ENCODE measurements at regions of chr7 and their contacts with region 1.

Region 1: DNA sequence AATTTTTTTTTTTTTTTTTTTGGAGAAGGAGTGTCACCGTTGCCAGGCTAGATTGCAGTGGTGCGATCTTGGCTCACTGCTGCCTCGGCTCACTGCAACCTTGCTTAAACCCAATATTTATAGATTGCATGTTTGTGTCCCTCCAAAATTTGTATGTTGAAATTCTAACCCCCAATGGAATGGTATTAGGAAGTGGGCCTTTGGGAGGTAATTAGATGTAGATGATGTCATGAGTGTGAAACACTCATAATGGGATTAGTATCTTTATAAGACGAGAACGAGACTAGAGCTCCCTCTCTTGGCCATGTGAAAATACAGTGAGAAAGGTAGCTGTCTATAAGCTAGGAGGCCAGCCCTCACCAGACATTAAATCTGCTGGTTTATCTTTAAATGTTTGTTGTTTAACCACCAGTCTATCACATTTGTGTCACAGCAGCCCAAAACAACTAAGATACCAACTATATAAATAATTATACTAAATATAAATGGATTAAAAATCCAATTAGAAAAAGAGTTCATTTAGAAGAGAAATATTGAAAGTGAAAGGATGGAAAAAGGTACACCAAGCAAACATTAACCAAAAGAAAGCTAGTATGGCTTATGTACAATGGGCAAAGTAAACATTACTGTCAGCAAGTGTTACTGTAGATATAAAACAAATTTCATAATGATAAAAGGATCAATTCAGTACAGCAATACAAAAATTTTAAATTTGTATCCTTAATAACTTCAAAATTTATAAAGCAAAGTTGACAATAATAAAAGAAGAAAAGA is 9.3 kb downstream of the TCAF1 start:
- DNase-seq: peak; percentile 30 to 49 (median 34)
- H3K4me3 ChIP-seq: no peak overlapping the region
- H3K4me3 Mint-ChIP-seq: peak overlapping the region in 3 of 8 donors; percentile 49 to 59 (median 53)
- H3K27ac ChIP-seq: no peak overlapping the region
- H3K27ac Mint-ChIP-seq: peak overlapping the region in 4 of 7 donors; percentile 3 to 68 (median 29)
- H3K4me1 ChIP-seq: no peaks in the 10 kb centered on the region
- H3K4me1 Mint-ChIP-seq: peaks cover 4 to 10% (median 5%) of the 10 kb centered on the region in 4 donors
- H3K27me3 ChIP-seq: no peaks in the 10 kb centered on the region
- H3K27me3 Mint-ChIP-seq: peaks cover 2% of the 10 kb centered on the region in 2 donors

Region 2: DNA sequence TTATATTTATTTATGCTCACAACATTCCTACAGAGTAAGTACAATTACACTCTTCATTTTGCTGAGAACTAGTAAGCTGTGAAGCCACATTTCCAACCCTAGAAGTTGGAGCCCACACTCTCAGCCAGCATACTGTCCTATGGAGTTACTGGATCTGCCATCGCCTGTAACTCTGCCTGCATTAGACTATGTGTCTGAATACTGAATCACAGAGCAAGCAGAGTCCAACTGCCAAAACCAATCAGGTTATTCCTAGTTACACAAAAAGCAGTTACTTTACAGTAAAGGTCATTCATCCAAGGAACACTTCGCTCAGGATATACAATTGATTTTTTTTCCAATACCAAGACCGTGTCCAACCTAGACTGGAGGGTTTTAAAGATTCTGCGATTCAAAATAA is 156.8 kb before region 1 on chr7:
- CTCF ChIA-PET with region 1: interaction called, 18 read pairs
- POLR2A ChIA-PET with region 1: no interaction called
- intact Hi-C with region 1: no loop called
- DNase-seq: no peak
- H3K4me3 ChIP-seq: no peak overlapping the region
- H3K4me3 Mint-ChIP-seq: no peak overlapping the region
- H3K27ac ChIP-seq: no peak overlapping the region
- H3K27ac Mint-ChIP-seq: no peak overlapping the region
- H3K4me1 ChIP-seq: no peaks in the 10 kb centered on the region
- H3K4me1 Mint-ChIP-seq: peaks cover 4 to 6% (median 5%) of the 10 kb centered on the region in 4 donors
- H3K27me3 ChIP-seq: no peaks in the 10 kb centered on the region
- H3K27me3 Mint-ChIP-seq: no peaks in the 10 kb centered on the region

Measured in CD4-positive, alpha-beta memory T cell (primary cell).